ENCODE measurements at regions of chr2 and their contacts with region 1.

Region 1: GRCh38 chr2:74178201-74179062 is at the start of gene MOB1A:
- DNase-seq: peak; percentile 99
- H3K4me3 Mint-ChIP-seq: peak within 1 kb of the TSS; percentile 78
- H3K27ac Mint-ChIP-seq: peak within 1 kb of the TSS; percentile 61
- H3K4me1 Mint-ChIP-seq: peaks cover 19% of the 10 kb centered on the region
- H3K27me3 Mint-ChIP-seq: no peaks in the 10 kb centered on the region
- CTCF ChIP-seq: no peak
- total RNA-seq, gene MOB1A: 92.6 and 97.5 TPM in 2 replicates

Region 2: GRCh38 chr2:73736855-73737779 is 441.3 kb before region 1 on chr2 and contains the start of gene TPRKB:
- CTCF ChIA-PET with region 1: no interaction called
- POLR2A ChIA-PET with region 1: interaction called, 11 read pairs
- intact Hi-C with region 1: no loop called
- DNase-seq: peak; percentile 98
- H3K4me3 Mint-ChIP-seq: peak within 1 kb of the TSS; percentile 86
- H3K27ac Mint-ChIP-seq: peak within 1 kb of the TSS; percentile 92
- H3K4me1 Mint-ChIP-seq: peaks cover 11% of the 10 kb centered on the region
- H3K27me3 Mint-ChIP-seq: no peaks in the 10 kb centered on the region
- CTCF ChIP-seq: no peak
- total RNA-seq, gene TPRKB: 40.4 and 51.0 TPM in 2 replicates

Region 3: GRCh38 chr2:73985308-73986084 is 192.9 kb before region 1 on chr2:
- CTCF ChIA-PET with region 1: no interaction called
- POLR2A ChIA-PET with region 1: interaction called, 12 read pairs
- intact Hi-C with region 1: no loop called
- DNase-seq: peak; percentile 42
- H3K4me3 Mint-ChIP-seq: peak overlapping the region; percentile 74
- H3K27ac Mint-ChIP-seq: no peak overlapping the region
- H3K4me1 Mint-ChIP-seq: peaks cover 57% of the 10 kb centered on the region
- H3K27me3 Mint-ChIP-seq: no peaks in the 10 kb centered on the region
- CTCF ChIP-seq: no peak

Region 4: DNA sequence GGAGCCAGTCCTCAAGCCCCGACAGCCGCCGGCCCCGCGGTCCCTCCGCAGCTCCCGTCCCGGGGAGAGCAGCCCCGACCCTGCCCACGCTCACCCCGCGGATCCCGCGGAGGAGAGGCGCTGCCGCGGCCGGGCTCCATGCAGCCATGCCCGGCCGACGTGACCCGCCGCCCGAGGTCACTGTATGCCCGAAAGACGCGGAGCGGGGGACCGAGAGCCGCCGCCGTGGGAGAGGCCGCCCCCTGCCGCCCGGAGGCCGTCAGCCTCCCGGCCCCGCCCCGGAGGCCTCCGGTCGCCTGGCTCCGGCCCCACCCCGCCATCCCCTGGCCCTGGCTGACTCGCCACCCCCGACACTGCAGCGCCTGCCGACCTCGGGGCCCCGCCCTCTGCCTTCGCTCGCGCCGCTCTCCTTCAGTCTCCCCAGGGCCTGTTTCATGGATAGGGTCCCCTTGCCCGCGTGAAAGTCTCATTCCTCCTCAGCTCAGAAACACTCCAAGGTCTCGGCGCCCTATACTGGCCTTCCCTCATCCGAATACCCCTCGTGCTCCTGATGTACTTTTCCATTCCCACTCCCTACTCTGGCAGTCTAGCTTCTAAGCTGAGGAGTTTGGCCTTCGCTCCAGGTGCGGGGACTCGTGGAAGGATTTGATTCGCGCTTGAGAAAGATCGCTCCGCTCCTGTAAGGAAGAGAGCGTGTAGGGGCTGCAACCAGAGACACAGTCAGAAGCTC is 30.5 kb before region 1 on chr2 and contains the start of gene BOLA3:
- CTCF ChIA-PET with region 1: interaction called, 12 read pairs
- POLR2A ChIA-PET with region 1: interaction called, 15 read pairs
- intact Hi-C with region 1: no loop called
- DNase-seq: peak; percentile 80
- H3K4me3 Mint-ChIP-seq: no peak within 1 kb of the TSS
- H3K27ac Mint-ChIP-seq: no peak within 1 kb of the TSS
- H3K4me1 Mint-ChIP-seq: no peaks in the 10 kb centered on the region
- H3K27me3 Mint-ChIP-seq: no peaks in the 10 kb centered on the region
- CTCF ChIP-seq: peak; percentile 70
- total RNA-seq, gene BOLA3: 72.5 and 83.8 TPM in 2 replicates

Region 5: GRCh38 chr2:74162951-74163350 is 15.5 kb before region 1 on chr2:
- CTCF ChIA-PET with region 1: interaction called, 5 read pairs
- POLR2A ChIA-PET with region 1: interaction called, 41 read pairs
- intact Hi-C with region 1: no loop called
- DNase-seq: no peak
- H3K4me3 Mint-ChIP-seq: no peak overlapping the region
- H3K27ac Mint-ChIP-seq: no peak overlapping the region
- H3K4me1 Mint-ChIP-seq: peaks cover 5% of the 10 kb centered on the region
- H3K27me3 Mint-ChIP-seq: no peaks in the 10 kb centered on the region
- CTCF ChIP-seq: no peak

Region 6: GRCh38 chr2:74198461-74199274 is 20.2 kb after region 1 on chr2 and contains the start of gene MTHFD2:
- CTCF ChIA-PET with region 1: interaction called, 3 read pairs
- POLR2A ChIA-PET with region 1: interaction called, 148 read pairs
- intact Hi-C with region 1: loop called (anchors 1 kb)
- DNase-seq: peak; percentile 99
- H3K4me3 Mint-ChIP-seq: peak within 1 kb of the TSS; percentile 94
- H3K27ac Mint-ChIP-seq: peak within 1 kb of the TSS; percentile 97
- H3K4me1 Mint-ChIP-seq: peaks cover 27% of the 10 kb centered on the region
- H3K27me3 Mint-ChIP-seq: no peaks in the 10 kb centered on the region
- CTCF ChIP-seq: peak; percentile 70
- total RNA-seq, gene MTHFD2: 387 and 470 TPM in 2 replicates

Region 7: GRCh38 chr2:74206180-74206688 is 27.8 kb after region 1 on chr2:
- CTCF ChIA-PET with region 1: interaction called, 3 read pairs
- POLR2A ChIA-PET with region 1: interaction called, 148 read pairs
- intact Hi-C with region 1: no loop called
- DNase-seq: peak; percentile 57
- H3K4me3 Mint-ChIP-seq: peak overlapping the region; percentile 43
- H3K27ac Mint-ChIP-seq: peak overlapping the region; percentile 75
- H3K4me1 Mint-ChIP-seq: peaks cover 33% of the 10 kb centered on the region
- H3K27me3 Mint-ChIP-seq: no peaks in the 10 kb centered on the region
- CTCF ChIP-seq: no peak